CD8-positive, alpha-beta T cell (primary cell): ENCODE measurements at regions of chr1 and their contacts with region 1.

Region 1: DNA sequence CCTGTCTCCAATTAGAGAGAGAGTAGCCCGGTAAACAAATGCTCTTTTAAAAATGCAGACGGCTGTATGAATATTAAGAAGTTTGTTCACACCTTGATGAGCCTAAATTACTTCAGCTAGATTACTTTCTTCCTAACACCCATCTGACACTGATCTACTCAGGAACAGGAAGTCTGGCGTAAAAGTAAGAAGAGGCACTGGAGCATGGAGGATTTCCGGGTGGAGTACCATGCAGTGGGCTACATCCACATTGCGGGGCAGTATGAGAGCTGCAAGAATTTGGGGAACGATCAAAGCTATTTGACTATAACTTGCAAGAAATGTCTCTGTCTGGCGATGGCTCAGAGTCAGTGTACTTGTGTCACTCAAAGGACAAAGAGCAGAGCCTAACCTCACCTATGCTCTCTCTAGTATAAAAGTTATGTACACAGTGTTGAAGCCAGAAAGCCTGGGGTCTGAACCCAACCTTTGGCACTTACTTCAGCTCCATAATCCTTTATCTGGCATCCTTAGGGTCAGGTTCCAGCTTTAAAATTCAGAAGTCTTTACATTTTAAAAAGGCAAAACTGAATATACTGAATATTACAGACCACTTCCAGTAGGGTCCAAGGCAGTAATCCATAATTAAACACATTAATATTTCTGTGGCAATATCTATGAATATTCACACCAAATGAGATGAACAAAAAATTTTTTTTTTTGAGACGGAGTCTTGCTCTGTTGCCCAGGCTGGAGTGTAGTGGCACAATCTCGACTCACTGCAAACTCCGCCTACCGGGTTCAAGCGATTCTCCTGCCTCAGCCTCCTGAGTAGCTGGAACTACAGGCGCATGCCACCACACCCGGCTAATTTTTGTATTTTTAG is 7.9 kb upstream of the GNPAT start:
- DNase-seq: no peak
- ATAC-seq: no peak
- H3K4me3 ChIP-seq: no peak overlapping the region
- H3K4me3 Mint-ChIP-seq: no peak overlapping the region
- H3K27ac ChIP-seq: no peak overlapping the region
- H3K27ac Mint-ChIP-seq: no peak overlapping the region
- H3K4me1 ChIP-seq: peaks cover 5% of the 10 kb centered on the region
- H3K4me1 Mint-ChIP-seq: peaks cover 62% of the 10 kb centered on the region
- H3K27me3 ChIP-seq: no peaks in the 10 kb centered on the region
- H3K27me3 Mint-ChIP-seq: no peaks in the 10 kb centered on the region
- CTCF ChIP-seq: no peak

Region 2: DNA sequence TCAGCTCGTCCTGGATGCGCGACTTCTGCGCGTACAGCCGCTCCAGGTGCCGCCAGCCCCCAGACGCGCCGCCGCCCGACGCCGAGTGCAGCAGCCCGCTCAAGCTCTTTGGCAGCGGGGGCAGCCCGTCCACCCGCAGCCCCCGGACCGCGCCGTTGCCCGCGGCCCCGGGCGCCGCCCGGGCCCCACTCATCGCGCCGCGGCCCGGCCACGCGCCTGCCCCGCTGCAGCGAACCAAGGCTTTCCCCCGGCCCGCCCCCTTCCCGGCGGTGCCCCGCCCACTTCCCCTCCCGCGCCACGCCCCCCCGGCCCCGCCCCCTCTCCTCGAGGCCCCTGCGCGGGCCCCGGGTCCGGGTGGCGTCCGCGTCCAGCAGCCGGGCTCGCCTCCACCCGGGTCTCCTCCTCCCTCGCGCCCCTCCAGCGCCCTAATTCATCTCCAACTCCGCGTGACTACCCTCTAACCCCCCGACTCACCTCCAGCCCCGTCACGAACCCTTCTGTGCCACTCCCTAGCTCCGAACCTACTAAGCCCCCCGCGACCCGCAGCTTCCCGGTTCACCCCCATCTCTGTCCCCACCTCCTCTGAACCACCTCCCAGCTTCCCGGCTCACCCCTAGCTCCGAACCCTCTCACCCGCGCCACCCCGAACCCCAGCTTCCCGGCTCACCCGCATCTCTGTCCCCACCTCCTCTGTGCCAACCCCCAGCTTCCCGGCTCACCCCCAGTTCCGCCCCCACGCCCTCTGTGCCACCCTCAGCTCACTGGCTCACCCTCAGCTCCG is 192.9 kb before region 1 on chr1 and contains the start of gene FAM89A:
- CTCF ChIA-PET with region 1: no interaction called
- POLR2A ChIA-PET with region 1: no interaction called
- intact Hi-C with region 1: loop called in 1 of 2 experiments (anchors 10 kb)
- DNase-seq: peak; percentile 44 to 86 (median 71)
- ATAC-seq: peak; percentile 72
- H3K4me3 ChIP-seq: peak within 1 kb of the TSS; percentile 81 to 83
- H3K4me3 Mint-ChIP-seq: peak within 1 kb of the TSS; percentile 83
- H3K27ac ChIP-seq: no peak within 1 kb of the TSS
- H3K27ac Mint-ChIP-seq: peak within 1 kb of the TSS; percentile 27
- H3K4me1 ChIP-seq: peaks cover 22% of the 10 kb centered on the region
- H3K4me1 Mint-ChIP-seq: peaks cover 33% of the 10 kb centered on the region
- H3K27me3 ChIP-seq: no peaks in the 10 kb centered on the region
- H3K27me3 Mint-ChIP-seq: no peaks in the 10 kb centered on the region
- CTCF ChIP-seq: no peak
- total RNA-seq, gene FAM89A: 1.4 to 2.1 TPM

Region 3: GRCh38 chr1:231216498-231216897 is 16.6 kb before region 1 on chr1:
- CTCF ChIA-PET with region 1: interaction called, 11 read pairs
- POLR2A ChIA-PET with region 1: no interaction called
- intact Hi-C with region 1: no loop called
- DNase-seq: no peak
- ATAC-seq: no peak
- H3K4me3 ChIP-seq: no peak overlapping the region
- H3K4me3 Mint-ChIP-seq: no peak overlapping the region
- H3K27ac ChIP-seq: no peak overlapping the region
- H3K27ac Mint-ChIP-seq: no peak overlapping the region
- H3K4me1 ChIP-seq: peaks cover 13% of the 10 kb centered on the region
- H3K4me1 Mint-ChIP-seq: peaks cover 22% of the 10 kb centered on the region
- H3K27me3 ChIP-seq: no peaks in the 10 kb centered on the region
- H3K27me3 Mint-ChIP-seq: no peaks in the 10 kb centered on the region
- CTCF ChIP-seq: no peak

Region 4: DNA sequence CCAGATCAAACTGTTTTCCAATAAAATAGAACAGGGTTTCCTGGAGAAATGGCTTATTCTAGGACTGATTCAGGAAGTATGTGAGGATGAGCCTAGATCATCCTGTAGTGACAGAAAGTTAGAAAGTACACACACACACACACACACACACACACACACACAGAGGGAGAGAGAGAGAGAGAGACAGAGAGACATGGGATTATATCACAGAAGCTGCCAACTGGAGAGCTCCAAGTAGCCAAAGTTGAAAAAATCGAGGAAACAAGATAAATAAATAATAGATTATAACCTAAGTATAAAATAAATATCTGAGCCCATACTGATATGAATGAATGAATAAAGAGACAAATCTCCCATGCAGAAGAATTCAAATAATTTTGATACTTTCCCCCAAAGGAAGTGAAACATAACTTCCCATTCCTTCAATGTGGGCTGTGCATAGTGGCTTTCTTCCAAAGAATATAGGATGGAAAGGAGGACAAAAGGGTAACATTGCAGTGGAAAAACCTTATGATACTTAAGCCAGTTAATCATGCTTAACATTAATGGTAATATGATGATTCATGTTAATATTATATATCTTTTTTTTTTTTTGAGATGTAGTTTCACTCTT is 1889.0 kb after region 1 on chr1:
- CTCF ChIA-PET with region 1: no interaction called
- POLR2A ChIA-PET with region 1: no interaction called
- intact Hi-C with region 1: no loop called
- DNase-seq: no peak
- ATAC-seq: no peak
- H3K4me3 ChIP-seq: no peak overlapping the region
- H3K4me3 Mint-ChIP-seq: no peak overlapping the region
- H3K27ac ChIP-seq: no peak overlapping the region
- H3K27ac Mint-ChIP-seq: no peak overlapping the region
- H3K4me1 ChIP-seq: no peaks in the 10 kb centered on the region
- H3K4me1 Mint-ChIP-seq: no peaks in the 10 kb centered on the region
- H3K27me3 ChIP-seq: no peaks in the 10 kb centered on the region
- H3K27me3 Mint-ChIP-seq: no peaks in the 10 kb centered on the region
- CTCF ChIP-seq: no peak